ENCODE measurements at regions of chr4 and their contacts with region 1.

Region 1: GRCh38 chr4:139603576-139604387 is 47.8 kb upstream of the SETD7 start:
- DNase-seq: peak; percentile 67
- ATAC-seq: peak; percentile 79
- H3K4me3 ChIP-seq: no peak overlapping the region
- H3K27ac ChIP-seq: no peak overlapping the region
- H3K4me1 ChIP-seq: 0 out of 2 replicates have a peak, but pooled peaks cover 7% of the 10 kb centered on the region
- H3K27me3 ChIP-seq: peaks cover 2 to 3% of the 10 kb centered on the region in 2 experiments; a peak in 3 of 5 replicates
- CTCF ChIP-seq: peak; percentile 78
- EP300 ChIP-seq: no peak
- POLR2A ChIP-seq: no peak
- RAD21 ChIP-seq: peak; percentile 38; the same call in 1 of the 2 replicates

Region 2: GRCh38 chr4:138870737-138871554 is 732.8 kb before region 1 on chr4:
- CTCF ChIA-PET with region 1: no interaction called
- POLR2A ChIA-PET with region 1: no interaction called
- in situ Hi-C with region 1: no loop called
- intact Hi-C with region 1: no loop called
- DNase-seq: peak; percentile 55
- ATAC-seq: peak; percentile 84
- H3K4me3 ChIP-seq: no peak overlapping the region
- H3K27ac ChIP-seq: no peak overlapping the region
- H3K4me1 ChIP-seq: no peaks in the 10 kb centered on the region
- H3K27me3 ChIP-seq: peaks cover 0 to 13% of the 10 kb centered on the region in 2 experiments; a peak in 3 of 5 replicates
- CTCF ChIP-seq: peak; percentile 82
- EP300 ChIP-seq: no peak
- POLR2A ChIP-seq: no peak
- RAD21 ChIP-seq: peak; percentile 84

Region 3: DNA sequence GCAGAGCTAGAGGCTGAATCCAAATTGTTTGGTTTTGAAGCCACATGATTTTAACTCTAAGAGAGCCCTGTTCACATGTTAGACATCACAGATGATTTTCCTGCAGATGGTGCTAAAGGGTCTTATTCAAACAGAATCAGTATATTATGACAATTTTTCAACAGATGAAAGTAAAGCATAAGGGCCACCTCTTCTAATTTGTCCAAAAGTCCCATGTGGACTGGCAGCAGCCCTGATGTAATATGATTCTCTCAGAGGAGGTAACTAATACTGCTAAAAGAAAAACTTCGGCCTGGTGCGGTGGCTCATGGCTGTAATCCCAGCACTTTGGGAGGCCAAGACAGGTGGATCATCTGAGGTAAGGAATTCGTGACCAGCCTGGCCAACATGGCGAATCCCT is 21.7 kb before region 1 on chr4:
- CTCF ChIA-PET with region 1: no interaction called
- POLR2A ChIA-PET with region 1: no interaction called
- in situ Hi-C with region 1: no loop called
- intact Hi-C with region 1: no loop called
- DNase-seq: no peak
- ATAC-seq: no peak
- H3K4me3 ChIP-seq: no peak overlapping the region
- H3K27ac ChIP-seq: no peak overlapping the region
- H3K4me1 ChIP-seq: no peaks in the 10 kb centered on the region
- H3K27me3 ChIP-seq: no peaks in the 10 kb centered on the region
- CTCF ChIP-seq: no peak
- EP300 ChIP-seq: no peak
- POLR2A ChIP-seq: no peak
- RAD21 ChIP-seq: no peak

Region 4: DNA sequence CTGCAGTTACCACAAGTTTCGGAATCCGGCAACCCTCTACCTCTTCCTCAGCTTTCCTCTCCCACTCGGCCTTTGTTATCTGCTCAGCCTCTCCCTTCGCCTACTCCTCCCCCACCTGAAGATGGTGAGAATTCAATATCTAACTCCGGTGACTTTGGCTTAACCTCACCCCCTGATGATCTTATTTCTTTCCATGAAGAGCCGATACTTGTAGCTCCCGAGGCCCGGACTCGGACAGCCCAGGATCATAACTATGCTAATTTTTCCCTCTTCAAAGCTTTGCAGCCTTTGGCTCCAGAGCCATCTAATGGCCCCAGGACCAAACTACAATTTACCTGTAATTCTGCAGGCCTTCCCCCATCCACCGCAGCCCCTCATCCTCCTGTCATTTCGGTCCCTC is 29.9 kb after region 1 on chr4:
- CTCF ChIA-PET with region 1: interaction called, 10 read pairs
- POLR2A ChIA-PET with region 1: no interaction called
- in situ Hi-C with region 1: no loop called
- intact Hi-C with region 1: loop called (anchors 1 kb)
- DNase-seq: peak; percentile 38
- ATAC-seq: peak; percentile 93
- H3K4me3 ChIP-seq: peak overlapping the region in 2 of 3 experiments; percentile 11 to 31; a peak in 3 of 6 replicates
- H3K27ac ChIP-seq: no peak overlapping the region
- H3K4me1 ChIP-seq: peaks cover 41% of the 10 kb centered on the region
- H3K27me3 ChIP-seq: no peaks in the 10 kb centered on the region
- CTCF ChIP-seq: peak; percentile 77
- EP300 ChIP-seq: no peak
- POLR2A ChIP-seq: no peak
- RAD21 ChIP-seq: peak; percentile 67

Region 5: GRCh38 chr4:139651282-139652194 is 47.8 kb after region 1 on chr4:
- CTCF ChIA-PET with region 1: interaction called, 43 read pairs
- POLR2A ChIA-PET with region 1: no interaction called
- in situ Hi-C with region 1: loop called (anchors 5 kb)
- intact Hi-C with region 1: loop called (anchors 1 kb)
- DNase-seq: peak; percentile 56
- ATAC-seq: peak; percentile 77
- H3K4me3 ChIP-seq: no peak overlapping the region
- H3K27ac ChIP-seq: no peak overlapping the region
- H3K4me1 ChIP-seq: peaks cover 29% of the 10 kb centered on the region
- H3K27me3 ChIP-seq: no peaks in the 10 kb centered on the region
- CTCF ChIP-seq: peak; percentile 88
- EP300 ChIP-seq: no peak; a peak in 1 of 4 replicates
- POLR2A ChIP-seq: no peak
- RAD21 ChIP-seq: peak; percentile 54; the same call in 1 of the 2 replicates

Region 6: DNA sequence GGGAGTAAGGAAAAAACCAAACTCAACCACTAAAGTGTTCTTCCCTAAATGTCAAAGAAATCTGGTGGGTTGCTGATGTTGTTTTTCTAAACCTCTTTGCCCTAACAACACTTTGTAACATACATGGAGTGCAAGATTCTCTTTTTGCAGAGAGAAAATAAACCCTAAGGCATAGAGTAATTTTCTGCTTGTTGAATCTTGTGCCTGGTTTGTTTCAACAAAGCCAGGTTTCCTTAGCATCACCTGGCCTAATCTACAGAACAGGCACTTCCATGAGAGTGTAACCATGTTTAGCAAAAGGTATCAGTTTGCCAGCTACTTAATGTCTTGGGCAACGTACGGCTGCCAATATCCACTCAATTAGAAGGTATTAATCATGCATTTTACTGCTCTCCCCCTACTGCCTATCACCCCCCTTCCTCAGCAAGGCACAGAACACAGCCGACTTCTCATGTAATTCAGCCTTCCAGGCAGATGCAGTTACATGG is 331.0 kb after region 1 on chr4:
- CTCF ChIA-PET with region 1: no interaction called
- POLR2A ChIA-PET with region 1: no interaction called
- in situ Hi-C with region 1: no loop called
- intact Hi-C with region 1: no loop called
- DNase-seq: no peak
- ATAC-seq: no peak
- H3K4me3 ChIP-seq: no peak overlapping the region
- H3K27ac ChIP-seq: no peak overlapping the region
- H3K4me1 ChIP-seq: peaks cover 14% of the 10 kb centered on the region
- H3K27me3 ChIP-seq: peaks cover 0 to 8% of the 10 kb centered on the region in 2 experiments; a peak in 2 of 5 replicates
- CTCF ChIP-seq: no peak
- EP300 ChIP-seq: no peak
- POLR2A ChIP-seq: no peak
- RAD21 ChIP-seq: no peak

Measured in HepG2 (cell line).